ENCODE measurements at regions of chr4 and their contacts with region 1.

Region 1: DNA sequence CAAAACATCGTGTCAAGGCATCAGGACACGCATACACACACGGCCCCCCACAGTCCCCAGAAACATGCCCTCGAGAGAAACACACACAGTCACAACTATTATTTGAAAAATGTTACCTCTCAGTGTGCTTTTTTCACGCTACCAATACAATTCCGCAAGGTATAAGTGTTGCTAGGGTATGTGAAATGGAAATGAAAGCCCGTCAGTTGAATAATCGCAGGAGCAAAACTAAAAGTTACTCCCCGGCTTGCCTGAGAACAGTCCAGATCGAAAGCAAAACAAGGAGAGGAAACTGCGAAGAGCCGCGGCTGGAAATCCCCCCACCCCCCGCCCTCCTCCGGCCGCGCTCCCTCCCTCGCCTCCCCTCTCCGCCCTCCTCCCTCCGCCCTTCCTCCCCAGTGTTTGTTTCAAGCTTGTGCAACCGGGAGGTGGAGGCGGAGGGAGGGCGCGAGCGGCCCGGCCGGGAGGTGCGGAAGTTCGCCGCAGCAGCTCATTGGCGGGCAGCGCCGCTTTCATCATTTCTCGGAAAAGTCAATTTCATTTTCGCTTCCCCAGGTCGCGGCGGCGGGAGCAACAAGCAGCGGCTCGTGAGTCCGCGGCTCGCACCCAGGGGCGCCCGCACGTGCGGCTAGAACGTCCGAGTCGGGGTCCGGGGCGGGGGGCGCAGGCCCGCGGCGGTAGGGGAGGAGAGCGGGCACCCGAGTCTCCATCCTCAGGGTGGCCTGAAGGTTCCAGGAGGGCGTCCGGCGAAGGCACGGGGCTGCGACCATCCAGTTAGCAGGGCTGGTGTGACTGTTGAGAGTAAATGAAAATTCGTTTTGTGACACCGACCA is at the start of gene IRF2:
- DNase-seq: peak; percentile 98
- H3K4me3 ChIP-seq: peak within 1 kb of the TSS; percentile 86 to 98 (median 96)
- H3K27ac ChIP-seq: peak within 1 kb of the TSS; percentile 82
- H3K4me1 ChIP-seq: peaks cover 26% of the 10 kb centered on the region
- H3K27me3 ChIP-seq: no peaks in the 10 kb centered on the region
- CTCF ChIP-seq: no peak
- POLR2A ChIP-seq: peak; percentile 74
- total RNA-seq, gene IRF2: 24.6 and 27.6 TPM in 2 replicates

Region 2: DNA sequence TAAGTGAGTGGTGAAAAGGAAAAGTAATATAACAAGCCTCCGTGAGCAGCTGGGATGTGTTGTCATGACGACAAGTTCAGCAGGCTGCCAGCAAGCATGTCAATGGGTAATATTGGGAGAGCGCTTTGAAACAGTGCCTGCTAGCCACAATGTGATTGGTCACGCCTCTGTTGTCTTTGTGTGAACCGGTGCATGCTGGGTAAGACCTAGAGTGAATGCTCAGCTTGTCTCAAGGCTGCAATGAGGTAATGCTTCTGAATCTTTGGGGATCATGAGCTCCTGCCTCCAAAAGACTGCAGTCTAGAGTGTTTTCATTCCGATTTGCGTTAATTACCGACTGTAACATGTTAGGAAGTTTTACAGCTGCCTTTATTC is 514.4 kb before region 1 on chr4:
- CTCF ChIA-PET with region 1: no interaction called
- POLR2A ChIA-PET with region 1: no interaction called
- dilution Hi-C with region 1: no loop called
- intact Hi-C with region 1: no loop called
- DNase-seq: no peak
- H3K4me3 ChIP-seq: no peak overlapping the region
- H3K27ac ChIP-seq: no peak overlapping the region
- H3K4me1 ChIP-seq: no peaks in the 10 kb centered on the region
- H3K27me3 ChIP-seq: no peaks in the 10 kb centered on the region
- CTCF ChIP-seq: no peak
- POLR2A ChIP-seq: no peak

Region 3: GRCh38 chr4:184168406-184169019 is 306.0 kb before region 1 on chr4:
- CTCF ChIA-PET with region 1: no interaction called
- POLR2A ChIA-PET with region 1: no interaction called
- dilution Hi-C with region 1: no loop called
- intact Hi-C with region 1: no loop called
- DNase-seq: peak; percentile 53
- H3K4me3 ChIP-seq: no peak overlapping the region
- H3K27ac ChIP-seq: no peak overlapping the region
- H3K4me1 ChIP-seq: no peaks in the 10 kb centered on the region
- H3K27me3 ChIP-seq: peaks cover 0 to 3% of the 10 kb centered on the region in 2 experiments
- CTCF ChIP-seq: peak; percentile 90 to 99
- POLR2A ChIP-seq: no peak

Region 4: GRCh38 chr4:184248216-184248615 is 226.3 kb before region 1 on chr4:
- CTCF ChIA-PET with region 1: no interaction called
- POLR2A ChIA-PET with region 1: no interaction called
- dilution Hi-C with region 1: no loop called
- intact Hi-C with region 1: no loop called
- DNase-seq: no peak
- H3K4me3 ChIP-seq: no peak overlapping the region
- H3K27ac ChIP-seq: no peak overlapping the region
- H3K4me1 ChIP-seq: no peaks in the 10 kb centered on the region
- H3K27me3 ChIP-seq: peaks cover 0 to 3% of the 10 kb centered on the region in 2 experiments
- CTCF ChIP-seq: no peak
- POLR2A ChIP-seq: no peak

Region 5: GRCh38 chr4:184343502-184344177 is 130.8 kb before region 1 on chr4:
- CTCF ChIA-PET with region 1: interaction called, 5 read pairs
- POLR2A ChIA-PET with region 1: no interaction called
- dilution Hi-C with region 1: no loop called
- intact Hi-C with region 1: loop called (anchors 1 kb)
- DNase-seq: peak; percentile 87
- H3K4me3 ChIP-seq: peak overlapping the region; percentile 80 to 90 (median 83)
- H3K27ac ChIP-seq: peak overlapping the region; percentile 62
- H3K4me1 ChIP-seq: peaks cover 13% of the 10 kb centered on the region
- H3K27me3 ChIP-seq: no peaks in the 10 kb centered on the region
- CTCF ChIP-seq: no peak
- POLR2A ChIP-seq: peak; percentile 78

Region 6: DNA sequence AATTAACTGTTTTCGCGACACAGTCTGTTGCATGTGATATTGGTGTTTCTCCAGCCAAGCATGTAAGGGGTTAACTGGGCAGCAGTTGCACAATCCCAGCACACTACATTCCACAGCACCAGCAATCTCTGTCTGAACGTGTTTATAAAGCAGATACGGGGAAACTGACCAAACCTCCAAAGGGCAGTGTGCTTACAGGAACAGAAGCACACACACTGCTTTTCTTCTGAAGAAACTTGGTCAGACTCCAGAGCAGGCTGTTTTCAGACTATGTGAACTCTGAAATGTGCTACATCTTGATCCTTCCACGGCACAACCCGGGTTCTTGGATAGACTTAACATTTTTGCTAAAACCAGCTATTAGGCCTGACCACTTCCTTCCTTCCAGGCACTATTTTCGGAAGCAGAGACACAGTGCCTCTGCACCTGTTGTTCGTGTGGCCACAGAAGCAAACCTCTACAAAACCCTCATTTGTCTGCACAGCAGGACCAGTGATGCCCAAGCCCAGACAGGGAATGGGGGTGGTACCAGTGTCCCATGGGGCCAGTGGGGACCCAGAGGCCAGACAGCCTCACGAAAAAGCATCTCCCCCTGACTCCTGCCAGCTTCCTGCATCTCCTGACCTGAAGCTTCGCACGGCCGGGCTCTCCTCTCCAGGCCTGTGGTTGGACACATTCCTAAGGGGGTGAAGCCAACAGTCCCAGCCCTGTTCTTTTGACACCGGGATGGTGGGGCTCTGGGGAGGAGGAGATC is 90.2 kb before region 1 on chr4:
- CTCF ChIA-PET with region 1: no interaction called
- POLR2A ChIA-PET with region 1: no interaction called
- dilution Hi-C with region 1: no loop called
- intact Hi-C with region 1: loop called (anchors 1 kb)
- DNase-seq: peak; percentile 74
- H3K4me3 ChIP-seq: peak overlapping the region in 2 of 3 experiments; percentile 37 to 71
- H3K27ac ChIP-seq: peak overlapping the region; percentile 71
- H3K4me1 ChIP-seq: peaks cover 52% of the 10 kb centered on the region
- H3K27me3 ChIP-seq: no peaks in the 10 kb centered on the region
- CTCF ChIP-seq: no peak
- POLR2A ChIP-seq: no peak

Region 7: GRCh38 chr4:184453365-184454160 is 20.9 kb before region 1 on chr4:
- CTCF ChIA-PET with region 1: interaction called, 6 read pairs
- POLR2A ChIA-PET with region 1: no interaction called
- dilution Hi-C with region 1: no loop called
- intact Hi-C with region 1: loop called (anchors 1 kb)
- DNase-seq: peak; percentile 80
- H3K4me3 ChIP-seq: no peak overlapping the region
- H3K27ac ChIP-seq: peak overlapping the region; percentile 54
- H3K4me1 ChIP-seq: peaks cover 42% of the 10 kb centered on the region
- H3K27me3 ChIP-seq: no peaks in the 10 kb centered on the region
- CTCF ChIP-seq: no peak
- POLR2A ChIP-seq: no peak

Region 8: DNA sequence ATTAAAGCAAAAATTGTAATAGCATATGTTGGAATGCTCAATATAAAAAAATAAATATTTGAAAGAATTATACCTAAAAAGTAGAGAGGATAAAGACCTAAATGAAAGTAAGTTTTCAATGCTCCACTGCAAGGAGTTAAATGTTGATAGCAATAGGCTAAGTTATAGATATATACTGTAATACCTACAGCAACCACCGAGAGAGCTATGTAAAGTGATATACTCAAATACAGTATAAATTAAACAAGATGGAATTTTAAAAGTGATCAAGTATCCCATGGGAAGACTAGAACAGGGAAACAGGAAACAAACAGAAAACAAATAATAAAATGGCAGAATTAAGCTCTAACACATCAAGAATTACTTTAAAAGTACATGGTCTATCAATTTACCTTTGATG is 100.8 kb after region 1 on chr4:
- CTCF ChIA-PET with region 1: no interaction called
- POLR2A ChIA-PET with region 1: interaction called, 4 read pairs
- dilution Hi-C with region 1: no loop called
- intact Hi-C with region 1: loop called (anchors 1 kb)
- DNase-seq: peak; percentile 13
- H3K4me3 ChIP-seq: peak overlapping the region in 1 of 3 experiments; percentile 47
- H3K27ac ChIP-seq: peak overlapping the region; percentile 73
- H3K4me1 ChIP-seq: peaks cover 20% of the 10 kb centered on the region
- H3K27me3 ChIP-seq: no peaks in the 10 kb centered on the region
- CTCF ChIP-seq: no peak
- POLR2A ChIP-seq: no peak

Region 9: DNA sequence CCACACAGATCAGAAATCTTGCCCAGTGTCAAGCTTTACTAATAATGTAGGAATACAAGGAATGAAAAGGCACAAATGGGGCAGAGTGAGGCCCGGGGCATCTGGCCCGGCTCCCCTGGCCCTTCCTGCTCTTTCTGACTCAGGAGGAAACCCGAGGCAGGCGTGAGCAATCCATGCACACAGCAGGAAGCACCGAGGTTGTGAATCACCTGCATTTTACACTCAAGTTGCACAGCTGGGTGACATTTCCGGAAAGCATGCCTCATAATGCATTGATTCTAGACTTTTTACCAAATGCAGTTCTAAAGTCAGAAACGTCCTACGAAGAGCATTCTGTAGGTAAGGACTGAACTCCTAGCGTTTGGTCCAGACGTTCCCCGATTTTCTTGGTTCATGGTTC is 214.0 kb after region 1 on chr4:
- CTCF ChIA-PET with region 1: no interaction called
- POLR2A ChIA-PET with region 1: interaction called, 6 read pairs
- dilution Hi-C with region 1: no loop called
- intact Hi-C with region 1: loop called (anchors 1 kb)
- DNase-seq: peak; percentile 93
- H3K4me3 ChIP-seq: no peak overlapping the region
- H3K27ac ChIP-seq: peak overlapping the region; percentile 77
- H3K4me1 ChIP-seq: peaks cover 18% of the 10 kb centered on the region
- H3K27me3 ChIP-seq: no peaks in the 10 kb centered on the region
- CTCF ChIP-seq: no peak
- POLR2A ChIP-seq: peak; percentile 54

Region 10: DNA sequence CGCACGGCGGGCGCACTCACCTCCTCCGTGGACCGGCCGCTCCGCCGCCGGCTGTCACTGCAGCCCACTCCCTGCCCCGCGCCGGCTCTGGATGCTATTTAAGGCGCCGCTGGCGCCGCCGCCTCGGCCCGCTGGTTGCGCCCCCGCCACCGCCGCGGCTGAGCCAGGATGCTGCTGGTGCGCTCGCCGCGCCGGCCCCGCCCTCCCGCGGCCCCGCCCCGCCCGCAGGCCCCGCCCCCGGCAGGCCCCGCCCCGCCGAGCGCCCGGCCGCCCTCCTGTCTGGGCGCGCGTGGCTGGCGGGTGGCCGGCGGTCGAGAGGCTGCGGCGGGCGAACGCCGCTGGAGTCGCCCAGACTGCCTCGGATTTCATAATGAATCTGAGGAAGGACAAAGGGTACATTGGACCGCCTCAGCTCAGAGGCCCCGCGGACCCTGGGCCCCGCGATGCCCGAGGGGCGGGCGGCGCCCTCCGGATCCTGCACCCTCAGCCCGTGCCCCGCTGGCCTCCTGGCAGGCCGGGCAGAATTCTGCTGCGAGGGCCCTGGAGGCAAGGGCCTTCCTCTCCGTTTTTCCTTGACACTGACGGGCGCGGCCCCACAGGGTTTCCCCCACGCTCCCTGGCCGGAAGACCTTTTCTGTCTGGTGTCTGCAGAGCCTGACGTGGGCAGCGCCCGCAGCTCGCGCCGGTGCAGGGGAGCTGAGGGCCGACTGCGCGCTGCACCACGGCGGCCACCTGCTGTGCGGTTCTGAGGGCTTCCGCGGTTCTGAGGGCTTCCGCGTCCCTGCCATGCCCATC is 351.6 kb after region 1 on chr4 and contains the start of gene ACSL1:
- CTCF ChIA-PET with region 1: no interaction called
- POLR2A ChIA-PET with region 1: no interaction called
- dilution Hi-C with region 1: no loop called
- intact Hi-C with region 1: loop called (anchors 10 kb)
- DNase-seq: peak; percentile 48
- H3K4me3 ChIP-seq: peak within 1 kb of the TSS; percentile 43 to 62 (median 51)
- H3K27ac ChIP-seq: peak within 1 kb of the TSS; percentile 40
- H3K4me1 ChIP-seq: peaks cover 13% of the 10 kb centered on the region
- H3K27me3 ChIP-seq: peaks cover 0 to 2% of the 10 kb centered on the region in 2 experiments
- CTCF ChIP-seq: no peak
- POLR2A ChIP-seq: no peak
- total RNA-seq, gene ACSL1: 17.7 and 18.9 TPM in 2 replicates